Activated CD8-positive, alpha-beta T cell treated with anti-CD3 and anti-CD28 coated beads, Interleukin-2, amount 10 ng/mL, durations not matched to agents 7 days and 5 days (primary cell): ENCODE measurements at regions of chr5 and their contacts with region 1.

Region 1: DNA sequence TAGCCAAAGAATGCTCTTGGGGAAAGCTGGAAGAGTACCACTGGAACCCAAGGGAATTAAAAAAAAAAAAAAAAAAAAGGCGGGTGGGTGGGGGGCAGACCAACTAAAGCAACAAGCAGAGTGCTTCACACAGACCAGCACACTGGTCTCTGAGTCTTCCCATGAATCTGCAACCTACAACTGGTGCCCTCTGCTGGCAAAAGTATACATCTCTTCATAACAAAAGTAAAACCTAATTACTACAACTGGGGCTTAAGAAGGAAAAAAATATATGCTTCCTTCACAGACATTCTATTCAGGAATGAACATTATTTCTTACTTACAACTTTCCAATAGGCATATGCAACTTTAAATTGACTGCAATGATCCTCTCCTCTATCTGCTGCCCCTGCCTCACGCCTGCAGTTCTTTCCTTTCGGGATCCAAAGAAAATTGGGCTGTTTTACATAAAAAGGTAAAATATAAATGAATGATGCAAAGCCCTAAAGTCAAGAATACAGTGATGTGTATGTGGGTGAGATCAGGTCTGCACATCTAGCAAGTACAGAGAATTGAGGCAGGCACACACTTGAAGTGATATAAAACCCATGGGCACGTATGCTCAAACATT is 7.2 kb upstream of the KLHL3 start:
- DNase-seq: peak; percentile 82
- ATAC-seq: peak; percentile 88
- H3K4me3 Mint-ChIP-seq: no peak overlapping the region
- H3K27ac Mint-ChIP-seq: no peak overlapping the region
- H3K4me1 Mint-ChIP-seq: peaks cover 19% of the 10 kb centered on the region
- H3K27me3 Mint-ChIP-seq: no peaks in the 10 kb centered on the region

Region 2: DNA sequence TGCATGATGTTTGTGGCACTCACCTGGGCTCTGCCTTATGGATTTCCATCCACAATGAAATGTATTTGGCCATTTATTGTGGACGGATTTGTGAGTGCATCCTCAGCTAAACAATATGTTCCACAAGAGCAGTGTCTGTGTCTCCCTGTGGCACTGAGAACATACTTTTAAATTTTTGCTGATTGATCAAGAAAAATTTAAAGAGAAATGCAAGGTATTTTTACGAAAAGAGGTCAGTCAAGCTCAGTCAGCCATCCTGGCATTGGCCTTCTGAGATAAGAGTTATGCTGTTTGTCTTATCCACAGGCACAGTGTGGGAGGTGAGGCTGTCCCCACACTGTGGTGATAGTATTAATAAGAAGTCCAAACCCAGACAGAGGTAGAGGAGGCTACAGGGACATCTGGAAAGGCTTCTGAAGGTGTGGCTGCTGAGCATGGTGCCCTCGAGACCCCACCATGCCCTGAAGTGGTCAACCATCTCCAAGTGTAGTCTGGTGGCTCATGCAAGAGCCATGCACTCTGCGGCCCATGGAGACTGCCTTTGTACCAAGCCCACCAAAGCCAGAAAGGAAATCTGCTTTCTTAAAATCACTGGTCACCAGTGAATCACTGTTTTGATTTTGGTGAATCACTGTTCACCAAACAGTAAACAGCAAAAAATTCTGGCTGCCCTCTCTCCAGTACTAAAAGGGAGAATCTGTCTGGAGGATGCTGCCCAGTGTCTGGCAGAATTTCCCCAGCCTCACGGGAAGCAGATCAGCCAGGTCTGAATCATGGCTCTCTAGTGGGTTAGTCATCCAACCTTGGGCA is 272.8 kb before region 1 on chr5:
- CTCF ChIA-PET with region 1: no interaction called
- POLR2A ChIA-PET with region 1: no interaction called
- DNase-seq: no peak
- ATAC-seq: no peak
- H3K4me3 Mint-ChIP-seq: no peak overlapping the region
- H3K27ac Mint-ChIP-seq: no peak overlapping the region
- H3K4me1 Mint-ChIP-seq: no peaks in the 10 kb centered on the region
- H3K27me3 Mint-ChIP-seq: peaks cover 15% of the 10 kb centered on the region

Region 3: DNA sequence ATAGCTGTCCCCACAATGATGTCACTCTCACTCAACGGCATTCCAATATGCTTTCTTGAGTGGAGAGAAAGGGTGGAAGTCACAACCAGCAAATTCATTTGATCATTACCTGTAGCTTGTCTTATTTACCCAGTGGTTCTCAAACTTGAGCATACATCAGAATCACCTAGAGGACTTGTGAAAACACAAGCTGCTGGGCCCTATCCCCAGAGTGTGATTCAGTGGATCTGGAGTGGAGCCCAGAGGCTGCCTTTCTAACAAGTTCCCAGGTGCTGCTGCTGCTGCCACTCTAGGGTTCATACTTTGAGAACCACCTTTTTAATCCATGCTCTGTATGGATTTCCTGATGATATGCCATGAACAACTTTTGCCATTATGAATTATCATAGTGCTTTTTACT is 102.0 kb before region 1 on chr5:
- CTCF ChIA-PET with region 1: interaction called, 15 read pairs
- POLR2A ChIA-PET with region 1: no interaction called
- DNase-seq: no peak
- ATAC-seq: no peak
- H3K4me3 Mint-ChIP-seq: no peak overlapping the region
- H3K27ac Mint-ChIP-seq: no peak overlapping the region
- H3K4me1 Mint-ChIP-seq: no peaks in the 10 kb centered on the region
- H3K27me3 Mint-ChIP-seq: no peaks in the 10 kb centered on the region

Region 4: DNA sequence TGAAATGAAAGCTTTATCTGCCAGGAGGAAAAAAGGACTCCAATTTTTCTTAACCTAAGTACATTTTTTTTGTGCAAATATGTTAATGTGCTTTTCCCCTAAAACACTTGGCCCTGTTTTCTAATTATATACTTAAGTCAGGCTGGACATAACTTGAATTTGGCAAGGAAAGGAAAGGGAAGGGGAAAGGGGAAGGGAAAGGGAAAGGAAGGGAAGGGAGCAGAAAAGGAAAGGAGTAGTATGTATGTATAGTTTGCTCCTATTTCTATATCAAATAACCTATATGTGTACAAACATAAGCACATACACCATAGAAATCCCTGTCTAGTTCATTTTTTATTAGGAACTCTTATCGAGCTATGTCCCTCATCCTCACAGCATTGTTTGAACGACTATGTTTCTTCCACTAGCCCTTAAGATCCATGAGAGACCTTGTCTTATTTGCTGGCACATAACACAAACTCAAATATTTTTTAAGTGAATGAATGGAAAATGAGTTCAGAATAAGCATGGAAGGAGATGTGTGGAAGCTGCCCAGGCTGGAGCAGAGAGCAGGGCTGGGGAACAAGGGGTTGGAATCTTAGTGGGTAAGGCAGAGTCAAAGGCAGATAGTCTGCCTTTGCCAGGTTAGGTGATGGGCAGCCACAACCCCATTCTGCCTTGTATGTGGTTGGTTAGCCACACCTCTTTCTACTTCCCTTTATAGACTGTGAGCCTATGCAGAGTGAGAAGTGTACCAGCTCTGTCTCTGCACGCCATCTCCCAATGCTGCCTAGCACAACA is 77.3 kb before region 1 on chr5:
- CTCF ChIA-PET with region 1: interaction called, 569 read pairs
- POLR2A ChIA-PET with region 1: interaction called, 15 read pairs
- DNase-seq: peak; percentile 76
- ATAC-seq: peak; percentile 100
- H3K4me3 Mint-ChIP-seq: peak overlapping the region; percentile 10
- H3K27ac Mint-ChIP-seq: peak overlapping the region; percentile 83
- H3K4me1 Mint-ChIP-seq: peaks cover 37% of the 10 kb centered on the region
- H3K27me3 Mint-ChIP-seq: no peaks in the 10 kb centered on the region

Region 5: GRCh38 chr5:137728048-137728447 is 15.1 kb before region 1 on chr5:
- CTCF ChIA-PET with region 1: interaction called, 22 read pairs
- POLR2A ChIA-PET with region 1: no interaction called
- DNase-seq: no peak
- ATAC-seq: no peak
- H3K4me3 Mint-ChIP-seq: no peak overlapping the region
- H3K27ac Mint-ChIP-seq: no peak overlapping the region
- H3K4me1 Mint-ChIP-seq: peaks cover 15% of the 10 kb centered on the region
- H3K27me3 Mint-ChIP-seq: no peaks in the 10 kb centered on the region